Aorta (tissue), 5 donors: ENCODE measurements at regions of chr22 and their contacts with region 1.

Region 1: GRCh38 chr22:29343313-29343805 is 27.9 kb upstream of the RASL10A start:
- DNase-seq: peak in 1 of 2 donors; percentile 50
- ATAC-seq: no peak
- H3K4me3 ChIP-seq: no peak overlapping the region
- H3K27ac ChIP-seq: no peak overlapping the region
- H3K4me1 ChIP-seq: no peaks in the 10 kb centered on the region
- H3K27me3 ChIP-seq: no peaks in the 10 kb centered on the region

Region 2: GRCh38 chr22:29267858-29268417 is 75.4 kb before region 1 on chr22 and contains the starts of genes EWSR1 and RHBDD3:
- intact Hi-C with region 1: loop called in 1 of 2 experiments (anchors 2 kb)
- DNase-seq: peak; percentile 98
- ATAC-seq: peak; percentile 96
- H3K4me3 ChIP-seq: peak within 1 kb of the TSS; percentile 79 to 86
- H3K27ac ChIP-seq: peak within 1 kb of the TSS; percentile 71 to 94
- H3K4me1 ChIP-seq: peaks cover 1 to 2% of the 10 kb centered on the region in 2 donors
- H3K27me3 ChIP-seq: no peaks in the 10 kb centered on the region
- total RNA-seq, gene EWSR1: 176 to 184 TPM
- total RNA-seq, gene RHBDD3: 9.0 to 17.4 TPM

Region 3: GRCh38 chr22:29313121-29313580 is 30.2 kb before region 1 on chr22:
- intact Hi-C with region 1: loop called in 1 of 2 experiments (anchors 2 kb)
- DNase-seq: peak; percentile 40 to 79
- ATAC-seq: no peak
- H3K4me3 ChIP-seq: no peak overlapping the region
- H3K27ac ChIP-seq: no peak overlapping the region
- H3K4me1 ChIP-seq: no peaks in the 10 kb centered on the region
- H3K27me3 ChIP-seq: no peaks in the 10 kb centered on the region